Activated B cell treated with CpG ODN at 0.5 μM for 24 hours (primary cell): ENCODE measurements at regions of chr5 and their contacts with region 1.

Region 1: GRCh38 chr5:139517683-139518564 is 35.4 kb upstream of the STING1 start:
- DNase-seq: peak; percentile 93
- ATAC-seq: peak; percentile 93
- H3K4me3 Mint-ChIP-seq: peak overlapping the region; percentile 84
- H3K27ac Mint-ChIP-seq: peak overlapping the region; percentile 89
- H3K4me1 Mint-ChIP-seq: peaks cover 19% of the 10 kb centered on the region
- H3K27me3 Mint-ChIP-seq: no peaks in the 10 kb centered on the region
- CTCF ChIP-seq: peak; percentile 57

Region 2: GRCh38 chr5:139287890-139288635 is 229.9 kb before region 1 on chr5:
- CTCF ChIA-PET with region 1: interaction called, 5 read pairs
- POLR2A ChIA-PET with region 1: no interaction called
- intact Hi-C with region 1: loop called (anchors 2 kb)
- DNase-seq: no peak
- ATAC-seq: peak; percentile 42
- H3K4me3 Mint-ChIP-seq: no peak overlapping the region
- H3K27ac Mint-ChIP-seq: no peak overlapping the region
- H3K4me1 Mint-ChIP-seq: peaks cover 3% of the 10 kb centered on the region
- H3K27me3 Mint-ChIP-seq: no peaks in the 10 kb centered on the region
- CTCF ChIP-seq: no peak

Region 3: GRCh38 chr5:139422307-139422893 is 95.5 kb before region 1 on chr5:
- CTCF ChIA-PET with region 1: interaction called, 131 read pairs
- POLR2A ChIA-PET with region 1: interaction called, 5 read pairs
- intact Hi-C with region 1: loop called (anchors 1 kb)
- DNase-seq: no peak
- ATAC-seq: peak; percentile 99
- H3K4me3 Mint-ChIP-seq: no peak overlapping the region
- H3K27ac Mint-ChIP-seq: no peak overlapping the region
- H3K4me1 Mint-ChIP-seq: peaks cover 5% of the 10 kb centered on the region
- H3K27me3 Mint-ChIP-seq: no peaks in the 10 kb centered on the region
- CTCF ChIP-seq: no peak

Region 4: GRCh38 chr5:139543423-139543991 is 25.6 kb after region 1 on chr5:
- CTCF ChIA-PET with region 1: interaction called, 5 read pairs
- POLR2A ChIA-PET with region 1: no interaction called
- intact Hi-C with region 1: loop called (anchors 1 kb)
- DNase-seq: peak; percentile 66
- ATAC-seq: peak; percentile 98
- H3K4me3 Mint-ChIP-seq: peak overlapping the region; percentile 74
- H3K27ac Mint-ChIP-seq: peak overlapping the region; percentile 86
- H3K4me1 Mint-ChIP-seq: peaks cover 14% of the 10 kb centered on the region
- H3K27me3 Mint-ChIP-seq: no peaks in the 10 kb centered on the region
- CTCF ChIP-seq: no peak

Region 5: DNA sequence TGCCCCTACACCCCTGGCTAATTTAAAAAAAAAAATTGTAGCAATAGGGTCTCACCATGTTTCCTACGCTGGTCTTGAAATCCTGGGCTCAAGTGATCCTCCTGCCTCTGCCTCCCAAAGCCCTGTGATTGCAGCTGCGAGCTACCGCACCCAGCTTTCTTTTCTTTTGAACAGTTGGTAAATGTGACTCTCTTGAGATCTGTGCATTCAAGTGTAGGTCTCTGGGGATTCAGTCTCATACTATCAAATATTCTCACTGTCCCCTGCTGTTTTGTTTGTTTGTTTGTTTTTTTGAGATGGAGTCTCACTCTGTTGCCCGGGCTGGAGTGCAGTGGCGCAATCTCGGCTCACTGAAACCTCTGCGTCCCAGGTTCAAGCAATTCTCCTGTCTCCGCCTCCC is 88.0 kb after region 1 on chr5:
- CTCF ChIA-PET with region 1: interaction called, 3 read pairs
- POLR2A ChIA-PET with region 1: no interaction called
- intact Hi-C with region 1: loop called (anchors 5 kb)
- DNase-seq: no peak
- ATAC-seq: peak; percentile 86
- H3K4me3 Mint-ChIP-seq: peak overlapping the region; percentile 60
- H3K27ac Mint-ChIP-seq: peak overlapping the region; percentile 47
- H3K4me1 Mint-ChIP-seq: peaks cover 41% of the 10 kb centered on the region
- H3K27me3 Mint-ChIP-seq: no peaks in the 10 kb centered on the region
- CTCF ChIP-seq: no peak

Region 6: DNA sequence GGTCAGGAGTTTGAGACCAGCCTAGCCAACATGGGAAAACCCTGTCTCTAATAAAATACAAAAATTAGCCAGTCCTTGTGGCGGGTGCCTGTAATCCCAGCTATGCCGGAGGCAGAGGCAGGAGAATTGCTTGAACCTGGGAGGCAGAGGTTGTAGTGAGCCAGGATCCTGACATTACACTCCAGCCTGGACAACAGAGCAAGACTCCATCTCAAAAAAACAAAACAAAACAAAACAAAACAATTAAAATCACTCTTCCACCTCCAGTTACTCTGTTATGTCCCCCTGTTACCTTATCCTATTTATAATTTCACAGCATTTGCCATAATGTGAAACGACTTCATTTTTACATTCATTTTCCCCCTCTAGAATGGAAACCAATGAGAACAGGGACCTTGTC is 184.6 kb after region 1 on chr5:
- CTCF ChIA-PET with region 1: no interaction called
- POLR2A ChIA-PET with region 1: no interaction called
- intact Hi-C with region 1: no loop called
- DNase-seq: no peak
- ATAC-seq: no peak
- H3K4me3 Mint-ChIP-seq: no peak overlapping the region
- H3K27ac Mint-ChIP-seq: no peak overlapping the region
- H3K4me1 Mint-ChIP-seq: peaks cover 55% of the 10 kb centered on the region
- H3K27me3 Mint-ChIP-seq: peaks cover 14% of the 10 kb centered on the region
- CTCF ChIP-seq: no peak

Region 7: GRCh38 chr5:139765409-139766217 is 247.7 kb after region 1 on chr5:
- CTCF ChIA-PET with region 1: interaction called, 5 read pairs
- POLR2A ChIA-PET with region 1: no interaction called
- intact Hi-C with region 1: loop called (anchors 1 kb)
- DNase-seq: peak; percentile 87
- ATAC-seq: peak; percentile 86
- H3K4me3 Mint-ChIP-seq: peak overlapping the region; percentile 74
- H3K27ac Mint-ChIP-seq: peak overlapping the region; percentile 56
- H3K4me1 Mint-ChIP-seq: peaks cover 25% of the 10 kb centered on the region
- H3K27me3 Mint-ChIP-seq: peaks cover 9% of the 10 kb centered on the region
- CTCF ChIP-seq: peak; percentile 98